ENCODE measurements at regions of chr3 and their contacts with region 1.

Region 1: DNA sequence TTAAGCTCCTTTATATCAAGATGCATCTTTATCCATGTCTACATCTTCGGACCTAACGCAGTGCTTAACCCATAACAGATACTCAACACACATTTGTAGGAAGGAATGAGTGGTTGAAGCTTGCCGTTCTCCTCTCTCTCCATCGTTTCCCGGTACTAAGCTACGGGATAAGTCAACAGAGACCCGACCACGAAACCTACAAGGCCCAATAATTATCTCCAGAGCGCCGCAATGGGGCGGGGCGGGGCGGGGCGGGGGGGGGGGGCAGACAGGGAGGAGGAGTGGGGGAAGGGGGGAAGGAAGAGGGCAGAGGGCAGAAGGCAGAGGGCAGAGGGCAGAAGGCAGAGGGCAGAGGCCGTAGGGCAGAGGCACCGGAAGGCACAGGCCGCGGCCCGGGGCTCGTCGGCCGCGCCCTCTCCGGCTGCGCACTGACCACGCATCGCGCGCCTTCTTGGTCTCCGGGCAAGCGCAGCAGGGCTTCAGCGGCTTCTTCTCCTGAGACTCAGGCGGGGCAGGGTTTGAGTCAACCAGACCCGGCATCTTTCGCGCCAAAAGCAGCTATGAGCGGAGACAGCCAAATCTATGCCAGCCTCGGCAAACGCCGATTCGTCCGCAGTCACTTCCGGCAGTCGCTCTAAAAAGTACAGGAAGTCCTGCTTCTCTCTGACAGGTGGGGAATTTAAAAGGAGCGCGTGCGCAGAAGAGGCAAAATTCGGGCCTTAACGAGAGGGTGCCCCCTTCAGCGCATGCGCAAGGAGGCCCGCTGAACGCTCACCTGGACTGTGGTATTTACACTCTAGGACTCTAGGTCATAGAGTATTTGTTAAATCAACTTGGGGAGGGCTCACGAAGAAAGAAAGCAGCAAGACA is at the start of gene COX17:
- DNase-seq: peak; percentile 96
- H3K4me3 Mint-ChIP-seq: peak within 1 kb of the TSS; percentile 96
- H3K27ac Mint-ChIP-seq: peak within 1 kb of the TSS; percentile 94
- H3K4me1 Mint-ChIP-seq: peaks cover 36% of the 10 kb centered on the region
- H3K27me3 Mint-ChIP-seq: no peaks in the 10 kb centered on the region
- total RNA-seq, gene COX17: 61.2 and 64.9 TPM in 2 replicates

Region 2: GRCh38 chr3:119145500-119146191 is 531.4 kb before region 1 on chr3 and contains the start of gene TEX55:
- intact Hi-C with region 1: loop called (anchors 10 kb)
- DNase-seq: no peak
- H3K4me3 Mint-ChIP-seq: no peak within 1 kb of the TSS
- H3K27ac Mint-ChIP-seq: no peak within 1 kb of the TSS
- H3K4me1 Mint-ChIP-seq: no peaks in the 10 kb centered on the region
- H3K27me3 Mint-ChIP-seq: no peaks in the 10 kb centered on the region
- total RNA-seq, gene TEX55: not detected in 2 replicates

Region 3: GRCh38 chr3:119293871-119294695 is 382.9 kb before region 1 on chr3 and contains the start of gene ARHGAP31:
- intact Hi-C with region 1: loop called (anchors 1 kb)
- DNase-seq: peak; percentile 79
- H3K4me3 Mint-ChIP-seq: peak within 1 kb of the TSS; percentile 81
- H3K27ac Mint-ChIP-seq: peak within 1 kb of the TSS; percentile 86
- H3K4me1 Mint-ChIP-seq: peaks cover 51% of the 10 kb centered on the region
- H3K27me3 Mint-ChIP-seq: peaks cover 15% of the 10 kb centered on the region
- total RNA-seq, gene ARHGAP31: 13.2 and 14.0 TPM in 2 replicates

Region 4: DNA sequence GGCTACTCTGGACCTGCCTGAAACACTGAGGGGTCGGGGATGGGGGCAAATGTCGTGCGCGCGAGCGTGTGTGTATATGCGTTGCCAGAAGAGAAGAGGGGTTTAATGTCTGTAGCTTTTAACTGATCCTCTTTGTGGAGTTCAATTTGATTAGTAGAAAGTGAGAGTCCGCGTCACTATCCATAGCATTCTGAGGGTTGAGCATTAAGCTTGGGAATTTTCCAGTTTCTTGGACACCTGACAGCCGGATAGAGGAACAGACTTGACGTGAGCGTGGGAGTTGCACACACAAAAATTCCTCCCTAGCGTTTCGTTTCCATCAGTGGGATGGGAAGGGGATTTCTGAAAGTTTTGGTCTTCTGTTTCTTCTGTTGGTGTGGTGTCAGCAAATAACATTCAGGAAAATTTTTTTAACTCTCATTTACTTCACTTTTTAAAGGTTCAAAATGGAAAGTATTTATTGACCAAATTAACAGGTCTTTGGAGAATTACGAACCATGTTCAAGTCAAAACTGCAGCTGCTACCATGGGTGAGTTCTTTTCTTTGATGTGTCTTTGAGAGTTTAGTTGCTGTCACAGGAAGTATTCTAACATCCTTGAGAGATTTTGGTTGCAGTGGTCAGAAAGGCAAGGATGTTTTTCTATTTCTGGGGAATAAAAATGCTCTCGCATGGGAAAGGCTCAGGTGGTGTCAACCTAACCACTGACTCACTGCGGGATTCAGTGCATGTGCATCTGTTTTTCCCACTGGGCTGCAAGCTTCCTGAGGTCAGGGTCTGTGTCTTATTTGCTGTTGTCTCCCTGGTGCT is 207.4 kb before region 1 on chr3:
- intact Hi-C with region 1: loop called (anchors 1 kb)
- DNase-seq: no peak
- H3K4me3 Mint-ChIP-seq: peak overlapping the region; percentile 92
- H3K27ac Mint-ChIP-seq: peak overlapping the region; percentile 88
- H3K4me1 Mint-ChIP-seq: peaks cover 26% of the 10 kb centered on the region
- H3K27me3 Mint-ChIP-seq: no peaks in the 10 kb centered on the region

Region 5: DNA sequence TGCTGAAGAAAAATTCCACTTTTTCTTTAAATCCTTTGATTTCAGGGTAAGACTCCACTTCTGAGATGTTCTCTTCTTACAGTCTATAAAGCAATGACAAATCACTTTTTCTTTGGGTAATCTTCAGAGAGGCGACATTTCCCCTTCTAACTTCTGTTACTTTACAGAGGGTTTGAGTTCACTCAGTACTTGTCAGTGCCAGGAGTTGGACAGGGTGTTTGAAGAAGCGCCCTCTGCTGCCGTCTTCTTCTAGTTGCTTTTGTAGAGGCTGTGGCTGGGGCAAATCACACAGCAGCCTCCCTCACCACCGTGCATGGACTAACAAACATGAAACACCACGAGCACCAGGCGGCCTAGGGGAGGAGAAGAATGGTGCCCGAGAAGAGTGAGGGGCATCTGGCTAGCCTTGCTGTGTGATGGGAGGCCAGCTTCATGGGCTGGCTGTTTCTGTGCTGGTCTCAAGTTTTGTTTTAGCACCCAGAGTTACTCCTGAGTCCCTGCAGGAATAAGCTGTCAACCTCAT is 117.5 kb before region 1 on chr3 and contains the start of gene CD80:
- intact Hi-C with region 1: loop called (anchors 2 kb)
- DNase-seq: peak; percentile 54
- H3K4me3 Mint-ChIP-seq: peak within 1 kb of the TSS; percentile 55
- H3K27ac Mint-ChIP-seq: peak within 1 kb of the TSS; percentile 67
- H3K4me1 Mint-ChIP-seq: peaks cover 45% of the 10 kb centered on the region
- H3K27me3 Mint-ChIP-seq: no peaks in the 10 kb centered on the region
- total RNA-seq, gene CD80: 6.8 TPM in 2 replicates

Region 6: DNA sequence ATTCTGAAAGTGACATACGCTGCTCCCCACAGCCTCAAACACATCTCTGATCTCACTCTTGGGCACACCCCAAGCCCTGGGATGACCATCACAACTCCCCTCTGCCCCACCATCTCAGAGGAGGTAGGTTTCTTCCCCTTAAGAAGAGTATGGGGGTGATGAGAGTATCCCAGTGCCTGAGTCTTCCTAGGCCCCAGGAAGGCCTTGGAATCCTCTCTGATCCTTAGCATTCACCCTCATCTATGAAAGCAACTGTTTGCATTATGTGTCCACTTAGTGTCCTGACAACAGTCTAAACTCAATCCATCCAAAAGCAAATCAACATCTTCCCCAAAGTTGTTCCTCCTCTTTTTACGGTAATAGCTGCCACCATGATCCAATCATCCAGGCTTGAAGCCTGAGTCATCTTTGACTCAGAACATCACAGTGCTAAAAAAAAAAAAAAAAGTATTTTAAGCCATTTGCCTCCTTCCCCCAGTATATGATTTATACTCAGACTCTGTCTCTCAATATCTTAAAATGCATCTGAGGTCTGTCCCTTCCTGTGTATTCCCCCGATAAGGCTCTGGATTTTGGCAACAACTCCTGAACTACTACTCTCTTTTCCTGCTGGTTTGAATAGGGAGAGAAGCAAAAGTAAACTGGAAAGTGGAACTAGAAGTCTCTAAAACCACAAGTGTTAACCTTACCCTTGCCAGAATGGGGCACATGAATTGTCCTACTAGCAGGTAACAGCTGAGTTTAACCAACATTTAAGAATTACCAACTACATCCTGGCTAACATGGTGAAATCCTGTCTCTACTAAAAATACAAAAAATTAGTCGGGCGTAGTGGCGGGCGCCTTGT is 39.1 kb before region 1 on chr3:
- intact Hi-C with region 1: loop called (anchors 1 kb)
- DNase-seq: no peak
- H3K4me3 Mint-ChIP-seq: peak overlapping the region; percentile 18
- H3K27ac Mint-ChIP-seq: peak overlapping the region; percentile 86
- H3K4me1 Mint-ChIP-seq: peaks cover 42% of the 10 kb centered on the region
- H3K27me3 Mint-ChIP-seq: peaks cover 1% of the 10 kb centered on the region

Region 7: DNA sequence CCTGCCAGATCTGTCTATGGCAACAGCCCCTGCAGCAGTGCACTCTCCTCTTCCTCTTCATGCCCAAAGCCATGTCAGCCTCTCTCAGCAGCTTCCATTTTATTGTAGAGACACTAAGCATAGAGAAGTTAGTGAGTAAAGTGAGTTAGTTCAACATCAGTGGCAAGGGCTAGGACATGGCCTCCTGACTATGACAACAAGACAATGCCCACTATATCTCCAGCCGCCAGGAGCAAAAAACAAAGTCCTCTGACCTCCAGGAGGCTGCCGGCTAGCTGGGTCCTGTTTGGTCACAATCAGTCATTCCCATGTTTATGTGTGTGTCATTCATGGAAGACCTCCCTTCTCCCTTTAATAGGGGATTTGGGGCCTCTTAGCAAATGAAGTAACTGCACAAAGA is 119.8 kb after region 1 on chr3:
- intact Hi-C with region 1: no loop called
- DNase-seq: no peak
- H3K4me3 Mint-ChIP-seq: no peak overlapping the region
- H3K27ac Mint-ChIP-seq: no peak overlapping the region
- H3K4me1 Mint-ChIP-seq: no peaks in the 10 kb centered on the region
- H3K27me3 Mint-ChIP-seq: peaks cover 21% of the 10 kb centered on the region